A673 (cell line): ENCODE measurements at regions of chr2 and their contacts with region 1.

Region 1: GRCh38 chr2:209556354-209556961 is 132.6 kb downstream of the MAP2 start:
- DNase-seq: peak; percentile 59
- H3K4me3 ChIP-seq: no peak overlapping the region
- H3K27ac ChIP-seq: no peak overlapping the region
- H3K4me1 ChIP-seq: no peaks in the 10 kb centered on the region
- H3K27me3 ChIP-seq: no peaks in the 10 kb centered on the region
- CTCF ChIP-seq: peak; percentile 73

Region 2: DNA sequence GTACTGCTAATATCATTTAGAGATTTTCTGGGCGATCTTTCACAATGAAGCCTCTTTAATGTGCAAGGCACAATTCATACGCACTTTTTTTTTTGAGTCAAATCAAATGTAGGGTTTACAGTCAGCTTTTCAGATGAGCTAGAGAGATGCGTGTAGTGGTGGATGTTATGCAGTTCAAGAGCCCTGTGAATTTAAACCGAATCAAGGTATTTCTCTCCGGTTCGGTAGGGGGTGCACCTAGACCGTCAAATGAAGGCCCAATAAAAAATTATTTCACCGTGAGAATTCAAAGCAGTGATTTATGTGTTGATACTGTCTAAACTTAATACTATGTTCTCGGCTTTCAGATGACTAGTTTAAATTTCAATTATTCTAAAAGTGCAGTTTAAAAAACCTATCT is 1148.8 kb before region 1 on chr2:
- CTCF ChIA-PET with region 1: no interaction called
- POLR2A ChIA-PET with region 1: no interaction called
- intact Hi-C with region 1: loop called (anchors 10 kb)
- DNase-seq: peak; percentile 39
- H3K4me3 ChIP-seq: no peak overlapping the region
- H3K27ac ChIP-seq: no peak overlapping the region
- H3K4me1 ChIP-seq: no peaks in the 10 kb centered on the region
- H3K27me3 ChIP-seq: peaks cover 92% of the 10 kb centered on the region
- CTCF ChIP-seq: peak; percentile 42

Region 3: GRCh38 chr2:210195101-210195852 is 638.8 kb after region 1 on chr2:
- CTCF ChIA-PET with region 1: no interaction called
- POLR2A ChIA-PET with region 1: no interaction called
- intact Hi-C with region 1: no loop called
- DNase-seq: peak; percentile 67
- H3K4me3 ChIP-seq: peak overlapping the region; percentile 36
- H3K27ac ChIP-seq: no peak overlapping the region
- H3K4me1 ChIP-seq: peaks cover 24% of the 10 kb centered on the region
- H3K27me3 ChIP-seq: no peaks in the 10 kb centered on the region
- CTCF ChIP-seq: peak; percentile 79